ENCODE measurements at regions of chr1 and their contacts with region 1.

Region 1: DNA sequence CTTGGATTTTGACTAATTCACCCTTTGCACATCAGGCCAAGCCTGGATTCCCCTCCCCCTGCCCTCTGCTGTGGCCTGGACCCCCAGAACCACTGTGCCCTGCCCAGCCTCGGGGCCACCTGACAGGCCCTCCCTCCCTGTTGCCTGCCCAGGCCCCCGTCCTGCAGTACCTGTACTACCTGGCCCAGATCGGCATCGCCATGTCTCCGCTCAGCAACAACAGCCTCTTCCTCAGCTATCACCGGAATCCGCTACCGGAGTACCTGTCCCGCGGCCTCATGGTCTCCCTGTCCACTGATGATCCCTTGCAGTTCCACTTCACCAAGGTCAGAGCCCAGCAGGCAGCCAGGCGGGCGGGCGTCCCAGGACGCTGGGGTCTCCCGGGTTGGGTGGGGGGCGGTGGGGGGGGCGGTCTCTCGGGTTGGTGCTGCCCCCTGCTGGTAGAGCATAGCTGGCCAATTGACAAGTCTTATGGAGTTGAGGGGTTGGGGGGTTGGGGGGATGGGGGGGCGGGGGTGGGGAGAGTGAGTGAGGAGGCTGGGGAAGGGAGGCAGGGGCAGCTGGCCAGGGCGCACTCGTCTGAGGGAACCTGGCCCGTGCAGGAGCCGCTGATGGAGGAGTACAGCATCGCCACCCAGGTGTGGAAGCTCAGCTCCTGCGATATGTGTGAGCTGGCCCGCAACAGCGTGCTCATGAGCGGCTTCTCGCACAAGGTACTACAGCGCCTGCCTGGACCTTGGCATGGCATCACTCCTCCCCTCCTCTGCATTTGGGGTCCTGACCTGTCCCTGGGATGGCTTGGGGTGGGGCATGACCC is 10.7 kb downstream of the AMPD2 start:
- DNase-seq: no peak
- ATAC-seq: no peak

Region 2: DNA sequence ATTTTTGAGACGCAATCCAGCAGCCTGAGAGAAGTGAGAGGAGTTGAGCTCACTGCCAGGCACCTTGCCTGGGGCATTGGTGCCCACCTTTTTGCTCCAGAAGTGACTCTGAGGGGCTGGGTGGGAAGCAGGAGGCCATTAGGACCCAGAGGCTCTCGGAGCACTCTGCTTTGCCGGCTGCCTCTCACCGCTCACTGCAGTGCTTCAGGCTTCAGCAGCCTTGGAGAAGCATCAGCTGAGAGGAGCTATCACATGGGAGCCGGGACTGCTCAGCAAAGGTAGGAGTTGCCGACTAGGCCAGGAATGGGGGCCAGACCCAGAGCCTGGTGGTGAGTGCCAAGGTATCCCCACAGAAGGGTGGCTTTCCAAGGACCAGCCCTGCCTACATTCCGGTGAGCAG is 90.6 kb before region 1 on chr1 and contains the start of gene GPR61:
- intact Hi-C with region 1: loop called in 1 of 2 experiments (anchors 5 kb)
- DNase-seq: no peak
- ATAC-seq: no peak
- total RNA-seq, gene GPR61: 0.36 TPM in 1 of 2 donors, not detected in the other

Measured in left colon (tissue), 2 donors.